Heart left ventricle (tissue), 16 donors: ENCODE measurements at regions of chr3 and their contacts with region 1.

Region 1: DNA sequence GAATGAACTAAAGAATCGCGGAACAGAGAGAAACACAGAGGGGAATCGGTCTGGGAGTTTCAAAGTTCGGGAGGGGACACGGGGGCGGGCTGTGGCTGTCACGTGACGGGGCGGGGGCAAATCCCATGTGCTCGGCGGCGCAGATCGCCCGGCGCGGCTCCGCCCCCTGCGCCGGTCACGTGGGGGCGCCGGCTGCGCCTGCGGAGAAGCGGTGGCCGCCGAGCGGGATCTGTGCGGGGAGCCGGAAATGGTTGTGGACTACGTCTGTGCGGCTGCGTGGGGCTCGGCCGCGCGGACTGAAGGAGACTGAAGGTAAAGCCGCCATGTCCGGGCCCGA is at the start of gene EIF4G1:
- DNase-seq: peak; percentile 96 to 98 (median 96)
- ATAC-seq: peak; percentile 79 to 91 (median 86)
- H3K4me3 ChIP-seq: peak within 1 kb of the TSS; percentile 46 to 92 (median 88)
- H3K27ac ChIP-seq: peak within 1 kb of the TSS; percentile 89 to 99 (median 96)
- H3K4me1 ChIP-seq: peaks cover 0 to 43% (median 37%) of the 10 kb centered on the region in 12 donors
- H3K27me3 ChIP-seq: no peaks in the 10 kb centered on the region
- CTCF ChIP-seq: no peak
- POLR2A ChIP-seq: peak in 1 of 2 donors; percentile 31
- total RNA-seq, gene EIF4G1: 211 to 406 (median 229) TPM

Region 2: GRCh38 chr3:184174646-184175492 is 139.5 kb before region 1 on chr3 and contains the start of gene AP2M1:
- intact Hi-C with region 1: loop called in 4 of 10 experiments (anchors 5 to 10 kb)
- DNase-seq: peak; percentile 98 to 99 (median 98)
- ATAC-seq: peak; percentile 91 to 97 (median 95)
- H3K4me3 ChIP-seq: peak within 1 kb of the TSS; percentile 64 to 100 (median 97)
- H3K27ac ChIP-seq: peak within 1 kb of the TSS; percentile 90 to 99 (median 96)
- H3K4me1 ChIP-seq: peaks cover 0 to 54% (median 33%) of the 10 kb centered on the region in 12 donors
- H3K27me3 ChIP-seq: no peaks in the 10 kb centered on the region
- CTCF ChIP-seq: peak in 1 of 12 donors; percentile 5
- POLR2A ChIP-seq: peak; percentile 40 to 93
- total RNA-seq, gene AP2M1: 225 to 400 (median 337) TPM

Region 3: GRCh38 chr3:184185461-184186308 is 128.6 kb before region 1 on chr3 and contains the start of gene ABCF3:
- intact Hi-C with region 1: loop called in 2 of 10 experiments (anchors 10 kb)
- DNase-seq: peak; percentile 99 to 100 (median 100)
- ATAC-seq: peak; percentile 98
- H3K4me3 ChIP-seq: peak within 1 kb of the TSS; percentile 55 to 99 (median 92)
- H3K27ac ChIP-seq: peak within 1 kb of the TSS; percentile 54 to 96 (median 92)
- H3K4me1 ChIP-seq: peaks cover 0 to 33% (median 24%) of the 10 kb centered on the region in 12 donors
- H3K27me3 ChIP-seq: no peaks in the 10 kb centered on the region
- CTCF ChIP-seq: no peak
- POLR2A ChIP-seq: peak in 1 of 2 donors; percentile 73
- total RNA-seq, gene ABCF3: 58.2 to 81.9 (median 69.2) TPM

Region 4: DNA sequence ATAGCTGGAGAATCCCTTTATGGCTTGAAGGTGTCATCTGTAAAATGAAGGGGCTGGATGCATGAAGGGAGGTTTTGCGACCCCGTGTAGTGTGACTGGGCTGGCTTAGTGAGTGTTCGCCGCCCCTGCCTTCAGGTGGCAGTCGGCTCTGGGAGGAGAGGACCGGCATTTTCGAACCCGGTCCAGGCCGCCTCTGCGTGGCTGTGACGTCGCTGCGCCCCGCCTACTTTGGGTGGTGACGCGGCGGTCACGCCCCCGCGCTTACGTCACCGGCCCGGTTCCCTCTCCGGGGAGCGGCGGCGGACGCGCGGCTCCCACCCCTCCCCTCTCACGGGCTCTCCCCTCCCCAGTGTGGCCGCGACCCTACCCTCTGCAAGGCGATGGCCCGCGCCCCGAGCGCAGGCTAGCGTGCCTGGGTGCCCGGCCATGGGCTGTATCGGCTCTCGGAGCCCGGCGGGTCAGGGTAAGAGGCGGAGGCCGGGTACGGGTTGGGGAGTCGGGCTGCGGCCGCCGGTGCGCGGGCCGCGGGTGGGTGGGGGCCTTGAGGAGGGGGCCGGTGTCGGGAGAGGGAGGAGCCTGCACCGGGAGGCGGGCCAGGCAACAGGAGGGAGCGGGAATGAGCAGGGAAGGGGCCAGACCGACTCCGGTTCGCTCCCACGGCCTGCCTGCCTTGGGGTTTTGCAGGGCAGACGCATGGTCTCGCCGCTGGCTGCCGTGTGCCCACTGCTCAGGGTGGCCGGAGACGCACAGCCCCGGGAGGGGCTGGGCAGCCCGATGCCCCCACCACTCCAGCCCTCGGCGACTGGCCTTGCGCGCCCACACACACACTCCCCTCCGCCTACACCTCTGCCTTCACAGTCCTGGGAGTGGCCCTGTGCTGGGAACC is 21.6 kb after region 1 on chr3:
- intact Hi-C with region 1: loop called in 3 of 10 experiments (anchors 2 kb)
- DNase-seq: peak; percentile 87 to 93 (median 91)
- ATAC-seq: peak; percentile 17 to 66 (median 64)
- H3K4me3 ChIP-seq: peak overlapping the region; percentile 66 to 95 (median 86)
- H3K27ac ChIP-seq: peak overlapping the region; percentile 75 to 100 (median 96)
- H3K4me1 ChIP-seq: peaks cover 11 to 54% (median 37%) of the 10 kb centered on the region in 12 donors
- H3K27me3 ChIP-seq: no peaks in the 10 kb centered on the region
- CTCF ChIP-seq: no peak
- POLR2A ChIP-seq: peak; percentile 85

Region 5: DNA sequence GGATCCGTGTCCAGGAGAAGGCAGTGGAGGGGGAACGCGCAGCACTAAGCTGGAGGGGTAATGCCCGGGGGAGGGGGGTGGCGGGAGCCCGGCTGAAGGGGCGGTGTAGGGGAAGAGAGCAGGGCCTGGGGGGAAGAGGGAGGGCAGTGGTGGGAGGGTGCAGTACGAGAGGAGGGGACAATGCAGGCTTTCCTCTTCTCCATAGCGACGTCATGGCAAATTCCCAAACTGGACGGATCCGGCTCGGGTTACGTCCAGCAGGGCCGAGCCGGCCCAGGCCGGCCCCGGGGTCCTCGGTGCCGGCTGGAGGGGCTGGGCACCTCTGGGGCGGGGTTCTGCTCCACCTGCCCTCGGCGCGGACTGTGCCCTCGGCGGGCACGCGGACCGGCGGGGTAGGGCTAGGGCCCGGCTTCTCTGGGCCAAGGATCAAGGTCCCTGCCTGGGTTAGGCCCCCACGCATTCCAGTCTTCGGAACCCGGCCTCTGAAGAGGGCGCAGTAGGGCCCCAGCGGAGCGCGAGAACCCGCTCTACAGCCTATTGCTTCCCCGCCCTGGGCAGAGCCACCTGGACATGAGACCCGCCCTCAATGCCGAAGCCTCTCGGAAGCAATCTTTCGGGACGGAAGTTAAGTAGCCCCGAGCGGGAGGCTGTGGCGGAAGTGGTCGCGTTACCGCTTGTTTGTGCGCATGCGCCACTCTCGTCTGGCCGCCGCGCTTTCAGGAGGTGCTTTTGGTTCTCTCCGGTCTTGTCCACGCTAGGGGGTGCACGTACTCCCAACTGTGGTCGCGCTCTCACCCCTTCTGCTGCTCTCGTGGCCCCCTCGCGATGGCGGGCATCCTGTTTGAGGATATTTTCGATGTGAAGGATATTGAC is 48.6 kb after region 1 on chr3:
- intact Hi-C with region 1: loop called in 2 of 10 experiments (anchors 2 to 10 kb)
- DNase-seq: peak; percentile 95 to 97 (median 97)
- ATAC-seq: peak; percentile 77 to 85 (median 79)
- H3K4me3 ChIP-seq: peak overlapping the region; percentile 63 to 100 (median 91)
- H3K27ac ChIP-seq: peak overlapping the region; percentile 97 to 100 (median 100)
- H3K4me1 ChIP-seq: peaks cover 0 to 31% (median 22%) of the 10 kb centered on the region in 12 donors
- H3K27me3 ChIP-seq: no peaks in the 10 kb centered on the region
- CTCF ChIP-seq: peak in 11 of 12 donors; percentile 35 to 80 (median 63)
- POLR2A ChIP-seq: peak in 1 of 2 donors; percentile 83